ENCODE measurements at regions of chr3 and their contacts with region 1.

Region 1: GRCh38 chr3:71444028-71444860 is 139.3 kb downstream of the FOXP1 start:
- DNase-seq: peak; percentile 88
- ATAC-seq: peak; percentile 78
- H3K4me3 Mint-ChIP-seq: peak overlapping the region; percentile 76
- H3K27ac Mint-ChIP-seq: peak overlapping the region; percentile 99
- H3K4me1 Mint-ChIP-seq: peaks cover 95% of the 10 kb centered on the region
- H3K27me3 Mint-ChIP-seq: no peaks in the 10 kb centered on the region

Region 2: GRCh38 chr3:71238355-71238757 is 205.9 kb before region 1 on chr3:
- CTCF ChIA-PET with region 1: no interaction called
- POLR2A ChIA-PET with region 1: no interaction called
- DNase-seq: no peak
- ATAC-seq: no peak
- H3K4me3 Mint-ChIP-seq: no peak overlapping the region
- H3K27ac Mint-ChIP-seq: no peak overlapping the region
- H3K4me1 Mint-ChIP-seq: peaks cover 2% of the 10 kb centered on the region
- H3K27me3 Mint-ChIP-seq: no peaks in the 10 kb centered on the region

Region 3: GRCh38 chr3:71423151-71423906 is 20.9 kb before region 1 on chr3:
- CTCF ChIA-PET with region 1: interaction called, 18 read pairs
- POLR2A ChIA-PET with region 1: interaction called, 10 read pairs
- DNase-seq: no peak
- ATAC-seq: no peak
- H3K4me3 Mint-ChIP-seq: no peak overlapping the region
- H3K27ac Mint-ChIP-seq: peak overlapping the region; percentile 89
- H3K4me1 Mint-ChIP-seq: peaks cover 78% of the 10 kb centered on the region
- H3K27me3 Mint-ChIP-seq: no peaks in the 10 kb centered on the region

Measured in activated CD8-positive, alpha-beta T cell treated with anti-CD3 and anti-CD28 coated beads, Interleukin-2, amount 10 ng/mL, durations not matched to agents 7 days and 5 days (primary cell).